CD14-positive monocyte (primary cell): ENCODE measurements at regions of chr10 and their contacts with region 1.

Region 1: DNA sequence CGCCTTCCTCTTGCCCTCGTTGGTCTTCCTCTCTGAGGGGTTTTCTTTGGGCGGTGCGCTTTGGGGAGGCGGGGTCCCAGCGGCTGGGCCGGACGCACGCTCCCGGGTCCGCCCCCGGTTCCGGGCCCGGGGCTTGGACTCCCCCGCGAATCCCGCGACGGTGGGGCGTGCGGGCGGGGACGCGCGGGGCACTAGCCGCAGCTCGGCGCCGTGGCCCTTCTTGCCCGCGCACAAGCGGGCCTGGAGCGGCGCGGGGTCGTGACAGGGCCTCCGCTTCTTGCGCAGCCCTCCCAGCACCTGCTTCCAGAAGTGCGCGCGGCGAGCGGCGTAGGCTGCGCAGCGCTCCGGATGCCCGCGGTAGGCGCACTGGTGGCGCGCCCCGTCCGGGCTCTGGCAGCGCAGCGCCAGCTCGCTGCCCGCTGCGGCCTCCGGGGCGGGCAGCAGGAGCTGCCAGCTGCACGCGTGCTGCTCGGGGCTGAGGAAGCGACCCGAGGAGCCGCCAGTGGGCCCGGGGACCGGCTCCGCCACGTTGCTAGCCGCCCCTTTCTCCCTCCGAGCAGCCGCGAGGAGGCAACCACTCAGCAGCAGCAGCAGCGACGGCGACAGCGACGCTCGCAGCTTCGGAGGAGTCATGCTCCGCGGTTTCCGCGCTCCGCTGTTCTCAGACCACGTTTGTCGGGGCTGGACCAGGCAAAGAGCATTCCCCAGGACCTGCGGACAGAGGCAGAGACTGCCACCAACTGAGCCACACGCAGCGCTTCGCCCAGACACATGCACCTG is 759 bp downstream of the FGFBP3 start:
- DNase-seq: peak; percentile 63 to 70 (median 67)
- H3K4me3 ChIP-seq: peak overlapping the region; percentile 42 to 78 (median 70)
- H3K4me3 Mint-ChIP-seq: peak overlapping the region; percentile 94 to 96
- H3K27ac ChIP-seq: peak overlapping the region; percentile 44 to 50
- H3K27ac Mint-ChIP-seq: peak overlapping the region; percentile 56 to 79 (median 77)
- H3K4me1 ChIP-seq: peaks cover 10 to 25% of the 10 kb centered on the region in 2 donors
- H3K4me1 Mint-ChIP-seq: peaks cover 21% of the 10 kb centered on the region
- H3K27me3 ChIP-seq: peaks cover under 1 to 2% of the 10 kb centered on the region in 2 donors
- H3K27me3 Mint-ChIP-seq: peaks cover 1 to 5% (median 5%) of the 10 kb centered on the region in 3 donors
- CTCF ChIP-seq: peak; percentile 31

Region 2: DNA sequence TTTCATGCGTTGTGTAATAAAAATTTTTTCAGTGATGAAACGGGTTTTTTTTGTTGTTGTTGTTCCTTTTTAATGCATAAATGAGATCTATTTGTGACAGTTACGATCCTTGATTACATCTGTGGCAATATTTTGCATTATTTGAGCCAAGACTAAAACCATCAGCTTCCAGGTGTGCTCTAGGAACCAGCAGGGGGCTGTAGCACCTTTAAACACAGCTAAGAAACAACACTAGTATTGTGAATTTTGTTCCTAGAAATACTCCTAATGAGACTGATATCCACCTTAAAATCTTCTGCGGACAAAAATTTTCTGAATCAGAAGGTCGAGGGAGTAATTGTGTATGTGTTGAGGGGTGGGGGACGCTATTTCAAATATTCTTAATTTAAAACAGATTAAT is 51.9 kb before region 1 on chr10:
- intact Hi-C with region 1: loop called in 1 of 2 experiments (anchors 10 kb)
- DNase-seq: no peak
- H3K4me3 ChIP-seq: no peak overlapping the region
- H3K4me3 Mint-ChIP-seq: no peak overlapping the region
- H3K27ac ChIP-seq: no peak overlapping the region
- H3K27ac Mint-ChIP-seq: no peak overlapping the region
- H3K4me1 ChIP-seq: no peaks in the 10 kb centered on the region
- H3K4me1 Mint-ChIP-seq: no peaks in the 10 kb centered on the region
- H3K27me3 ChIP-seq: no peaks in the 10 kb centered on the region
- H3K27me3 Mint-ChIP-seq: no peaks in the 10 kb centered on the region
- CTCF ChIP-seq: peak; percentile 28

Region 3: DNA sequence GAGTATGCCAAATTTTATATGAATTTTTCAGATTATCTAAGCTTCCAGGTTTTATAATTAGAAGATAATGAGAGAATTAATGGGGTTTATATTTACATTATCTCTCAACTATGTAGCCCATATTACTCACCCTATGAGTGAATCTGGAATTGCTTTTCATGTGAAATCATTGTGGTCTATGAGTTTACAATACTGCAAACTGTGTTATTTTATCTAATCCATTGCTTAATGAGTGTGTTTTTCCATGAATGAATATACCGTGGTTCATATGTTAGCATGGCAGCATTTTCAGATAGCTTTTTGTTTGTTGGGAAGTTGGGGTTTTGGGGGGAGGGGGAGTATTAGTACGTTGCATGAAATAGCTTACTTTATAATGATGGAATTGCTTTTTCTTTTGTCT is 43.8 kb before region 1 on chr10:
- intact Hi-C with region 1: loop called (anchors 5 to 10 kb)
- DNase-seq: no peak
- H3K4me3 ChIP-seq: no peak overlapping the region
- H3K4me3 Mint-ChIP-seq: no peak overlapping the region
- H3K27ac ChIP-seq: no peak overlapping the region
- H3K27ac Mint-ChIP-seq: peak overlapping the region in 1 of 7 donors; percentile 8
- H3K4me1 ChIP-seq: no peaks in the 10 kb centered on the region
- H3K4me1 Mint-ChIP-seq: no peaks in the 10 kb centered on the region
- H3K27me3 ChIP-seq: no peaks in the 10 kb centered on the region
- H3K27me3 Mint-ChIP-seq: peaks cover 0 to 3% (median 0%) of the 10 kb centered on the region in 3 donors
- CTCF ChIP-seq: no peak